PC-9 (cell line): ENCODE measurements at regions of chrX and their contacts with region 1.

Region 1: GRCh38 chrX:120536061-120536460 is 24.7 kb downstream of the CUL4B start:
- DNase-seq: no peak
- H3K4me3 ChIP-seq: no peak overlapping the region
- H3K27ac ChIP-seq: no peak overlapping the region
- H3K4me1 ChIP-seq: no peaks in the 10 kb centered on the region
- H3K27me3 ChIP-seq: no peaks in the 10 kb centered on the region
- CTCF ChIP-seq: no peak

Region 2: GRCh38 chrX:120763269-120763668 is 227.2 kb after region 1 on chrX:
- CTCF ChIA-PET with region 1: no interaction called
- POLR2A ChIA-PET with region 1: interaction called, 17 read pairs
- intact Hi-C with region 1: no loop called
- DNase-seq: peak in 1 of 2 experiments; percentile 65
- H3K4me3 ChIP-seq: no peak overlapping the region
- H3K27ac ChIP-seq: peak overlapping the region; percentile 71
- H3K4me1 ChIP-seq: peaks cover 22% of the 10 kb centered on the region
- H3K27me3 ChIP-seq: no peaks in the 10 kb centered on the region
- CTCF ChIP-seq: no peak